ENCODE measurements at regions of chr11 and their contacts with region 1.

Region 1: DNA sequence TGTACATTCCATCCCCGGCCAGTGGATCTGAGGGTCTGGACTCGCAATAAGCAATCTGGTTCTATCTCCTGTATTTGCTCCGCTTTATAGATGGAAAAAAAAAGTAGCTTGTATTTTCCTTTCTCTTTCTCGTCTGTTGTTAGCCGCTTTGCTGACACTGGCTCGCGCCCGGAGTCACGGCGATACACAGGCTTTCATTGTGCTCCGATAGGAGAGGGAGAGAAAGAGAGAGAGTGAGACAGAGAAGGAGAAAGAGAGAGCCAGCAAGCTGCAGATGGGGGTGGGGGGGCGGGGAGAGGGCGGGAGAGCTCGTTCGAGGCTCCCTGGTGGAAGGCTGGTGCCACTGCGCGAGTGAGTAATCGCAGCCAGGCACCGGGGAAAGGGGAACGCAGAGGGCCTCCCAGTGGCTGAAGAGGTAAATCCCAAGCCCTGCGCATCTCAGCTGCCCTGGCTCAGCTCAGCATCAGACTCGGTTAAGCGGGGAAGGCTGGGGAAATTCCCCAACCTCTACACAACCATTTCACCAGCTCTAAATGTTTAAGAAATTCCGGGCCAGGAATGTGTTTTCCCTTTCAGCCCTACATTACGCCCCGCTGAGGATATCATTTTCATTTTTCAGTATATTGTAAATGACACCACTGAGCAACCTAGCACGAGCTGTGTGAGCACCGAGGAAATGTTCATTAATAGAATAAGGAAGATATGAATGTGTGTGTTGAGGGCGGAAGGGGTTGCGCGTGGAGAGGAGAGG is at the start of gene MAML2:
- DNase-seq: peak; percentile 95
- ATAC-seq: peak; percentile 82
- H3K4me3 Mint-ChIP-seq: peak within 1 kb of the TSS; percentile 92
- H3K27ac Mint-ChIP-seq: peak within 1 kb of the TSS; percentile 92
- H3K4me1 Mint-ChIP-seq: peaks cover 33% of the 10 kb centered on the region
- H3K27me3 Mint-ChIP-seq: no peaks in the 10 kb centered on the region
- total RNA-seq, gene MAML2: 12.7 to 14.5 TPM

Region 2: GRCh38 chr11:95835768-95836488 is 507.2 kb before region 1 on chr11:
- CTCF ChIA-PET with region 1: interaction called, 40 read pairs
- DNase-seq: peak; percentile 64
- ATAC-seq: peak; percentile 86
- H3K4me3 Mint-ChIP-seq: no peak overlapping the region
- H3K27ac Mint-ChIP-seq: no peak overlapping the region
- H3K4me1 Mint-ChIP-seq: no peaks in the 10 kb centered on the region
- H3K27me3 Mint-ChIP-seq: no peaks in the 10 kb centered on the region

Region 3: GRCh38 chr11:96075532-96075959 is 267.6 kb before region 1 on chr11:
- CTCF ChIA-PET with region 1: interaction called, 12 read pairs
- DNase-seq: no peak
- ATAC-seq: peak; percentile 57
- H3K4me3 Mint-ChIP-seq: peak overlapping the region; percentile 34
- H3K27ac Mint-ChIP-seq: peak overlapping the region; percentile 74
- H3K4me1 Mint-ChIP-seq: peaks cover 37% of the 10 kb centered on the region
- H3K27me3 Mint-ChIP-seq: no peaks in the 10 kb centered on the region

Region 4: GRCh38 chr11:96122601-96123074 is 220.5 kb before region 1 on chr11:
- CTCF ChIA-PET with region 1: no interaction called
- DNase-seq: no peak
- ATAC-seq: no peak
- H3K4me3 Mint-ChIP-seq: no peak overlapping the region
- H3K27ac Mint-ChIP-seq: no peak overlapping the region
- H3K4me1 Mint-ChIP-seq: peaks cover 25% of the 10 kb centered on the region
- H3K27me3 Mint-ChIP-seq: no peaks in the 10 kb centered on the region

Region 5: DNA sequence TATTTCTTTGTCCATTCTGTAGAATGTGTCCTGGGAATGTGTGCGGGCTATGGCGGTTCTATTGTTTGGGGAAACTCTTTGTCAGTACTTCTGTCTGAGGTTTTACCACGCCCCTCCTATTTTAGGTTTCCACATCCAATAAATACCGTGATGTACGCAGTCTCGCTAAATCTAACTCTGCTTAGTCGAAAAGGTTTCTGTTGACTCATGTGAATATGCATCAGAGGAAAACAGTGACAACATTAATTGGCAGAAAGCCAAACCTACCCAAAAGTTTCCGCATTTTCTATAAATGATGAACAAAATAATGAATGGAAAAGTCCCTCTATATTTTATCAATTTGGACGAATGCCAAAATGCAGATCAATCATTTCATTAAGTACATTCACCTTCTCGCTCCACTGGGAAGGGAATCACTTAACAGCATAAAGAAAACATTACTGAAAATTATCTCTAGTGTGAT is 143.5 kb before region 1 on chr11:
- CTCF ChIA-PET with region 1: interaction called, 25 read pairs
- DNase-seq: no peak
- ATAC-seq: peak; percentile 78
- H3K4me3 Mint-ChIP-seq: peak overlapping the region; percentile 37
- H3K27ac Mint-ChIP-seq: peak overlapping the region; percentile 79
- H3K4me1 Mint-ChIP-seq: peaks cover 57% of the 10 kb centered on the region
- H3K27me3 Mint-ChIP-seq: no peaks in the 10 kb centered on the region

Region 6: DNA sequence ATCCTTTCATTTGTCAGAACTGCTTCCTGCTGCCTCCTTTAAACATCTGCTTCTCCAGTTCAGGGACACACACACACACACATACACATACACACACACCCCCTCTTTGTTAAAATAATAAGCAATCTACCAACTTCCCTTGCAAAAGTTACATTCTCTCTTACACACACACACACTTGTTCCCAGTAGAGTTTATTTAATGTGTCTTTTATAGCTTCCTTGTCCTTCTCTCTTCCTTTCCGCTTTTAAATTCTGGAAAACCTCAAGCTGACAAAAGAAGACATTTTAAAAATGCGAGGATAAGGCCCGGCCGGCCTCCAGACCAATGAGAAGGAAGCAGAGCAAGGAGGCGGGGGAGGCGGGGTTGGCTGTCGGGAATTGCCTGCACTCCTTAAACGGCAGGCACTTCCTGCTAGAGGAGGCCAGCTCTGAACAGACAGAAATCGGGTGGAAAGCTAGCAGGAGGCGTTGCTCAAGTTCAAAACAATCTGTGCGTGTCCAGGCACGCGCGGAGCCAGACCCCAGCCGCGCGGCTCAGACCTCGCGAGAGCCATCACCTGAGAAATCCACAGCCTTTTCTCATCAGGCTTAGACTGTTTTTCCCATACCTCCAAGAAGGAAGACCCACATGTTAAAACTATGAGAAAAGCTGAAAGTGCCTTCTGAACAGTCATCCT is 100.0 kb before region 1 on chr11:
- CTCF ChIA-PET with region 1: interaction called, 57 read pairs
- DNase-seq: peak; percentile 89
- ATAC-seq: peak; percentile 92
- H3K4me3 Mint-ChIP-seq: peak overlapping the region; percentile 82
- H3K27ac Mint-ChIP-seq: peak overlapping the region; percentile 90
- H3K4me1 Mint-ChIP-seq: peaks cover 51% of the 10 kb centered on the region
- H3K27me3 Mint-ChIP-seq: no peaks in the 10 kb centered on the region

Region 7: DNA sequence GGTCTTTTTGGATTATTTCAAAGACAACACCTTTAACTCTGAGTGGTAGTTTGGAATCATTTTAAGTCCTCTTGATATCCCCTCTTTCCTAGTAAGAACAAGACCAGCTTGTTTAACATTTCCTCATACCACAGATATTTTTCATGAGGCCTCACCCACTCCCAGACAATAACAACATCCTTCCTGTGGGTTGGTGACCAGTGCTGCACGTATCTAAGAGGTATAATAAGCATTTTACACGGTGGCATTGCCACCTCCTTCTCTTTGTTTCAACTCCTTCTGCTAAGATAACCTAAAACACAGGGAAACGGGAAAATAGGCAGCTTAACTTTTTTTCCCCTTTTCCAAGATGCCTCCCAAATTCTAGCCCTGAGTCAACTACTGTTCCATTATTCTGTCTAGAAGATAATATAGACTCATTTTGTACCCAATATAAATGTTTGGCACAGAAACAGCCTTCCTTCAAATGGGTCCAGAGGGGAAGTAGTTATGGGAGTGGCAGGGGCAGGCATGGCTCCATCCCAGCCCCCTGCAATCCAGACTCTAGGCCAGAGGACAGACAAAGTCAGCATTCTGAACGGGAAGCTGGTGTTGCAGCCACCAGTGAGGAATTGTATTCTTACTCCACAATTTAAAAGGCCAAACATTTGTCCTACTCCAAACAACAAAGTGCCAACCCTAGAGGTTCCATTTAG is 28.7 kb before region 1 on chr11:
- CTCF ChIA-PET with region 1: interaction called, 18 read pairs
- DNase-seq: no peak
- ATAC-seq: peak; percentile 29
- H3K4me3 Mint-ChIP-seq: peak overlapping the region; percentile 6
- H3K27ac Mint-ChIP-seq: peak overlapping the region; percentile 75
- H3K4me1 Mint-ChIP-seq: peaks cover 68% of the 10 kb centered on the region
- H3K27me3 Mint-ChIP-seq: no peaks in the 10 kb centered on the region

Region 8: GRCh38 chr11:96366024-96366423 is 22.9 kb after region 1 on chr11:
- CTCF ChIA-PET with region 1: interaction called, 12 read pairs
- DNase-seq: no peak
- ATAC-seq: no peak
- H3K4me3 Mint-ChIP-seq: no peak overlapping the region
- H3K27ac Mint-ChIP-seq: no peak overlapping the region
- H3K4me1 Mint-ChIP-seq: no peaks in the 10 kb centered on the region
- H3K27me3 Mint-ChIP-seq: no peaks in the 10 kb centered on the region